ENCODE measurements at regions of chr9 and their contacts with region 1.

Region 1: DNA sequence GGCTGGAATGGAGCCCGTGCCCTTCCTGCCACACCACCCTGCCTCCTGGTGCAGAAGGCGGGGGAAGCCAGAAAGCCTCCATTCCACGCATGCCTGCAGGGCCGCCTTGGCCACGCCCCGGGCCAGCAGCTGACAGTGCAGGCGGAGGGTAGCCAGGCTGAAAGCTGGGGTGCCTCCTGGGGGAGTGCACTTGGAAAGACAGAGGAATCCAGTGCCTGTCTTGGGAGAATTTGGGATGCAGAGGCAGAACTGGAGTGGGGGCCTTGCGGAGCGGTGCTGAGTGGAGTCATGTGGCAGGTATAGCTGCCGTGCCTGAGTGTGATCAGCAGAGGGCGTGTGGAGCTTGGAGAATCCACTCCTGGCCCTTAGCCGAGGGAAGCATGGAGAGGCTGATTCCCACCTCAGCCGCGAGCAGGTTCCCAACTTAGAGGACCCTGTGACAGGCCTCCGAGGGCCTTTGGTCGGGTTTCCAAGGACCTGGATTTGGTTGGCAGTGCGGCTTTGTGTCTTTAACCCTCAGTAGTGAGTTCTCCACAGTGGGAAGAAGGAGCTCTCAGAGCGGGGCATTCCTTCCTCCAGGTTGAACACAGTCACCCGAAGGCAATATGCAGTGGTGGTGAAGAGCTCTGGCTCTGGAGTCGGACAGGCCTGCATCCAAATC is 9.1 kb upstream of the URM1 start:
- DNase-seq: peak; percentile 97
- H3K4me3 ChIP-seq: peak overlapping the region; percentile 48 to 61 (median 54)
- H3K27ac ChIP-seq: peak overlapping the region; percentile 64 to 72 (median 66)
- H3K4me1 ChIP-seq: peaks cover 24 to 37% (median 30%) of the 10 kb centered on the region in 4 donors
- H3K27me3 ChIP-seq: no peaks in the 10 kb centered on the region
- CTCF ChIP-seq: peak; percentile 85 to 93 (median 92)
- EP300 ChIP-seq: no peak
- POLR2A ChIP-seq: no peak

Region 2: DNA sequence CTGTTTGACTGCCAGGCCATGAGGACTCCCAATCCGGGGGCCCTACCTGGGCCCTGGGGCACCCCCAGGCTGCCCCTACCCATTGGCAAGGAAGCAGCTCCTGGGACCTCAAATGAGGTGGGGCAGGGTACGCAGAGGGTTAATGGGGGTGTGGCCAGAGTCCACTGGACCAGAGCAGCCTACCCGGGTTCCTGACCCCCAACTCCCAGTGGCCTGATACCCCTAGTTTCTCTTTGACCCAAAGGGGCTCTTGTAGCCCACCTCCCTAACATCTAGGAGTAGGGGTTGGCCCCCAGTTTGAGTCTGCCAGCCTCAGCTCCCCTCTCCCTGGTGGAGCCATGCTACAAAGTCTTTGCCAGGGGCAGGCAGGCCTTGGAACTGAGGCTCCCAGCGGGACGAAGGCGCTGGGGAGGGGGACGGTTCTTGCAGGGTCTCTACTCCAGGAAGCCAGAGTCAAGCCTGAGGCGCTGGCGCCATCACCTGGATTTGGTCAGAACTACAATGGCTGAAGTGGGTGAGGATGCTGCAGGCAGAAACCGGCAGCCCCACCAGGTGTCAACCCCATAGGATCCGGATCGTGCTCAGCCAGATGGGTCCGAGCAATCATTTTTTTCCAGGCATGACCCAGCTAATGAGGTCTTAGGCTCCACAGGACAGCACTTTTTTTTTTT is 50.1 kb after region 1 on chr9:
- intact Hi-C with region 1: loop called (anchors 5 kb)
- DNase-seq: no peak
- H3K4me3 ChIP-seq: no peak overlapping the region
- H3K27ac ChIP-seq: no peak overlapping the region
- H3K4me1 ChIP-seq: peaks cover 0 to 6% (median 5%) of the 10 kb centered on the region in 4 donors
- H3K27me3 ChIP-seq: peaks cover 0 to 82% (median 3%) of the 10 kb centered on the region in 4 donors
- CTCF ChIP-seq: peak; percentile 42 to 52 (median 47)
- EP300 ChIP-seq: no peak
- POLR2A ChIP-seq: no peak

Region 3: DNA sequence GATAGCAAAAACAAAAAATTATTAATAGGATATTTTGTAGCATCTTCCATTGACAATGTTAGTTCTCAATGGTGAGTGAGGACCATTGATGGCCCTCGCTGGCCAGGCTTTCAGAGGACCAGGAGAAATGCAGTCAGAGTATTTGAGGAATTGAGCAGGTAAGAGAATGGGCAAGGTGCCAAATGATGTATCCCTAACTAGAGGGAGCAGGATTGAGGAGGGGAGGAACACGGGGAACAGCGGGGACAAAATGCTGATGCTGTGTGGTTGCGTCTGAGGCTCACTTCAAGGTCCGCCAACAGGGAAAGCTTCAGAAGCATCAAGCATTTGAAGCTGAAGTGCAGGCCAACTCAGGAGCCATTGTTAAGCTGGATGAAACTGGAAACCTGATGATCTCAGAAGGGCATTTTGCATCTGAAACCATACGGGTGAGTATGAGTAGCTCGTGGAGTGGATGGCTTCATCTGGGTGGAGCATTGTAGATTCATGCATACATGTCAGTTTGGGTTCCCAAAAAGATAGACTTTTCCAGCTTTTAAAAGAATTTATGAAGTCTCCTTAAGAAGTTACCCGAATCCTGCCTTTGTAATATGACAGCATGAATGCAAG is 206.5 kb after region 1 on chr9:
- intact Hi-C with region 1: no loop called
- DNase-seq: no peak
- H3K4me3 ChIP-seq: no peak overlapping the region
- H3K27ac ChIP-seq: no peak overlapping the region
- H3K4me1 ChIP-seq: peaks cover 9 to 28% (median 18%) of the 10 kb centered on the region in 4 donors
- H3K27me3 ChIP-seq: no peaks in the 10 kb centered on the region
- CTCF ChIP-seq: no peak
- EP300 ChIP-seq: no peak
- POLR2A ChIP-seq: no peak

Measured in esophagus muscularis mucosa (tissue), 4 donors.